Left lung (tissue), 14 donors: ENCODE measurements at regions of chr9 and their contacts with region 1.

Region 1: GRCh38 chr9:82532504-82533180 is 530.3 kb downstream of the RASEF start:
- DNase-seq: peak in 1 of 4 donors; percentile 24
- ATAC-seq: peak; percentile 78
- H3K4me3 ChIP-seq: no peak overlapping the region
- H3K27ac ChIP-seq: no peak overlapping the region
- H3K4me1 ChIP-seq: no peaks in the 10 kb centered on the region
- H3K27me3 ChIP-seq: no peaks in the 10 kb centered on the region
- CTCF ChIP-seq: peak in 1 of 2 donors; percentile 34

Region 2: GRCh38 chr9:82606492-82607382 is 74.1 kb after region 1 on chr9:
- intact Hi-C with region 1: loop called in 1 of 2 experiments (anchors 5 kb)
- DNase-seq: peak in 2 of 4 donors; percentile 76 to 78
- ATAC-seq: peak; percentile 94
- H3K4me3 ChIP-seq: no peak overlapping the region
- H3K27ac ChIP-seq: no peak overlapping the region
- H3K4me1 ChIP-seq: peaks cover 4 to 13% of the 10 kb centered on the region in 2 donors
- H3K27me3 ChIP-seq: no peaks in the 10 kb centered on the region
- CTCF ChIP-seq: peak; percentile 49 to 63